Activated CD8-positive, alpha-beta T cell treated with anti-CD3 and anti-CD28 coated beads for 36 hours (primary cell): ENCODE measurements at regions of chr6 and their contacts with region 1.

Region 1: GRCh38 chr6:142155895-142156757 is 9.1 kb downstream of the VTA1 start:
- DNase-seq: no peak
- ATAC-seq: peak; percentile 53
- H3K4me3 Mint-ChIP-seq: peak overlapping the region; percentile 0
- H3K27ac Mint-ChIP-seq: no peak overlapping the region
- H3K4me1 Mint-ChIP-seq: peaks cover 53% of the 10 kb centered on the region
- H3K27me3 Mint-ChIP-seq: no peaks in the 10 kb centered on the region
- CTCF ChIP-seq: peak; percentile 62

Region 2: DNA sequence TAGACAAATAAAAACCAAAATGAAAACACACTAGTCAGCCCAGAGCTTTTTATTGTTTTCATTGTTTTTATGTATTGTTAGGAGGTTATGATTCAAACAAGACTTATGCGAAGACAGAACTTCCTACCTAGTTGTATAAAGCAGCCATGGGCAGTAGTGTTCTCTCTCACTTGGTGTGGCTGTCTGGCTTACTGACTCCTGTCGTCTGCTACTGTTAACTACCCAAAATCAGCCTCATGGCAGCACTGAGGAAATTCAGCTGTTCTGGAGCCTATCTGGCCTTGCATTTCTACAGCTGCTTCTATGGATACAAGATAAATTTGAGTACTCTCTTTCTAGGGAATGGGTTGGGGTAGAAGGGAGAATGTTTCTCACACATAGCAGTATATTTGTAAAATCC is 11.4 kb after region 1 on chr6:
- CTCF ChIA-PET with region 1: interaction called, 21 read pairs
- POLR2A ChIA-PET with region 1: no interaction called
- intact Hi-C with region 1: no loop called
- DNase-seq: no peak
- ATAC-seq: no peak
- H3K4me3 Mint-ChIP-seq: no peak overlapping the region
- H3K27ac Mint-ChIP-seq: no peak overlapping the region
- H3K4me1 Mint-ChIP-seq: peaks cover 11% of the 10 kb centered on the region
- H3K27me3 Mint-ChIP-seq: no peaks in the 10 kb centered on the region
- CTCF ChIP-seq: no peak

Region 3: DNA sequence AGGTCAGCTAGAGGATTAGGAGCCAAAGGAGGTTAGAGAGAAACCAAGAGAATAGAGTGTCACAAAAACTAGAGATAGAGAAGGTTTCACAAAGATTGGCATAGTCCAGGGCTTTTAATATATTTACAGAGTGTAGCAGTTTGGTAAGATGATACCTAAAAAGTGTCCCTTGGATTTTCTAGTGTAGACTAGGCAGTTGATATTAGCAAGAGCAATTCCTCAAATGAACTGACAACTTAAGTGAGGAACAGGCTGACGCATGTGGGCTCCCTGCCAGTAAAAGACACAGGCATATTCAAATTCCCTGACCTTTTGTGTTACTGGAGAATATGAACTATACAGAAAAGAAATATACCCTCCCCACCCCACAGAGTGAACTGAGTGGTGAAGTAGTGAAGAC is 31.1 kb after region 1 on chr6:
- CTCF ChIA-PET with region 1: interaction called, 11 read pairs
- POLR2A ChIA-PET with region 1: no interaction called
- intact Hi-C with region 1: no loop called
- DNase-seq: no peak
- ATAC-seq: no peak
- H3K4me3 Mint-ChIP-seq: no peak overlapping the region
- H3K27ac Mint-ChIP-seq: no peak overlapping the region
- H3K4me1 Mint-ChIP-seq: peaks cover 4% of the 10 kb centered on the region
- H3K27me3 Mint-ChIP-seq: no peaks in the 10 kb centered on the region
- CTCF ChIP-seq: no peak

Region 4: GRCh38 chr6:142195862-142196541 is 39.9 kb after region 1 on chr6:
- CTCF ChIA-PET with region 1: interaction called, 13 read pairs
- POLR2A ChIA-PET with region 1: no interaction called
- intact Hi-C with region 1: no loop called
- DNase-seq: no peak
- ATAC-seq: no peak
- H3K4me3 Mint-ChIP-seq: no peak overlapping the region
- H3K27ac Mint-ChIP-seq: peak overlapping the region; percentile 49
- H3K4me1 Mint-ChIP-seq: peaks cover 38% of the 10 kb centered on the region
- H3K27me3 Mint-ChIP-seq: no peaks in the 10 kb centered on the region
- CTCF ChIP-seq: no peak